Common myeloid progenitor, CD34-positive (primary cell): ENCODE measurements at regions of chr1 and their contacts with region 1.

Region 1: GRCh38 chr1:151024540-151025146 is 11.7 kb upstream of the BNIPL start:
- DNase-seq: peak; percentile 87 to 92 (median 88)
- H3K4me3 ChIP-seq: peak overlapping the region in 2 of 7 experiments; percentile 25 to 29
- H3K27ac ChIP-seq: no peak overlapping the region
- H3K4me1 ChIP-seq: peaks cover 0 to 4% (median 1%) of the 10 kb centered on the region in 4 experiments
- H3K27me3 ChIP-seq: no peaks in the 10 kb centered on the region

Region 2: GRCh38 chr1:151006327-151007052 is 18.2 kb before region 1 on chr1 and contains the start of gene MINDY1:
- CTCF ChIA-PET with region 1: interaction called, 10 read pairs
- POLR2A ChIA-PET with region 1: no interaction called
- DNase-seq: peak; percentile 73 to 81 (median 78)
- H3K4me3 ChIP-seq: peak within 1 kb of the TSS; percentile 64 to 88 (median 84)
- H3K27ac ChIP-seq: peak within 1 kb of the TSS; percentile 95 to 98
- H3K4me1 ChIP-seq: peaks cover 36 to 95% (median 87%) of the 10 kb centered on the region in 4 experiments
- H3K27me3 ChIP-seq: no peaks in the 10 kb centered on the region

Region 3: GRCh38 chr1:151047925-151048645 is 23.4 kb after region 1 on chr1:
- CTCF ChIA-PET with region 1: interaction called, 54 read pairs
- POLR2A ChIA-PET with region 1: no interaction called
- DNase-seq: peak; percentile 72 to 87 (median 85)
- H3K4me3 ChIP-seq: peak overlapping the region; percentile 56 to 92 (median 80)
- H3K27ac ChIP-seq: peak overlapping the region in 1 of 2 experiments; percentile 49
- H3K4me1 ChIP-seq: peaks cover 2 to 18% (median 9%) of the 10 kb centered on the region in 4 experiments
- H3K27me3 ChIP-seq: no peaks in the 10 kb centered on the region

Region 4: DNA sequence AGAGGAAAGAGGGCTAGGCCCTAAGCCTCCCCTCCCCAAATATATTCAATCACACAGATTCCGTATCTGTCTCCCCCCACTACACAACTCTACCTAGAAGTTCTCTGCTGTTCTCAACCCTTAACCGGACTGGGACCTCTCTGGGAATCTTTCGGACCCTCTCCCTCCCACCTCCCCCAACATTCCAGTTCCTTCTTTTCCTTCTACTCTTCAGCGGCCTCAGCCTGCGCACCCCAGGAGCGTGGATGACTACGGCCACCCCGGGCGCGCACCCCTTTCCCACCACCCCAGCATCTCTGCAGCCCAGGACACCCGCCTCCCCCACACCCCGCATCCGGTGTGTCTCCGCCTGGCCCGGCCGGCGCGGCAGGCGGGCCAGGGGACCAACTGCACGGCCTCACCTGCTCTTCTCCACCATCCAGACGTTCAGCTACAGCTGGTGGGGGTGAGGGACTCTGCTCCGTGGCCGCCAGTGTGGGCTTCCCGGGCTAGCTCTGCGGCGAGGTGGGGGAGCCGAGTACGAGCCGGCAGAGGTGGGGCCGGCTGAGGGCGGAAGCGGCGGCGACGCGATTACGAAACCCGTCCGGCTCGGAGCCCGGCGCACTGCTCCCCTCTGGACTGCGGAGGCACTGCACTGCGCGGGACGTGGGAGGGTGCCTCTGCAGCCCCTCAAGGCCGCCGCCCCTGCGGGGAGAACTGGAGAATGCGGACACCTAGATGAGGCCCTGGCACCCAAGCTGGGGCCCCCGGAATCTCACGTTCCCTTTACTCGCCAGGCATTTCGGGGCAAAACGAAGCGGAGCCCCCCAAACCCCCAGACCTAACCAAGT is 34.6 kb after region 1 on chr1 and contains the start of gene CDC42SE1:
- CTCF ChIA-PET with region 1: interaction called, 22 read pairs
- POLR2A ChIA-PET with region 1: no interaction called
- DNase-seq: peak; percentile 92 to 96 (median 94)
- H3K4me3 ChIP-seq: peak within 1 kb of the TSS; percentile 66 to 98 (median 95)
- H3K27ac ChIP-seq: peak within 1 kb of the TSS; percentile 79 to 93
- H3K4me1 ChIP-seq: peaks cover 18 to 60% (median 53%) of the 10 kb centered on the region in 4 experiments
- H3K27me3 ChIP-seq: no peaks in the 10 kb centered on the region

Region 5: DNA sequence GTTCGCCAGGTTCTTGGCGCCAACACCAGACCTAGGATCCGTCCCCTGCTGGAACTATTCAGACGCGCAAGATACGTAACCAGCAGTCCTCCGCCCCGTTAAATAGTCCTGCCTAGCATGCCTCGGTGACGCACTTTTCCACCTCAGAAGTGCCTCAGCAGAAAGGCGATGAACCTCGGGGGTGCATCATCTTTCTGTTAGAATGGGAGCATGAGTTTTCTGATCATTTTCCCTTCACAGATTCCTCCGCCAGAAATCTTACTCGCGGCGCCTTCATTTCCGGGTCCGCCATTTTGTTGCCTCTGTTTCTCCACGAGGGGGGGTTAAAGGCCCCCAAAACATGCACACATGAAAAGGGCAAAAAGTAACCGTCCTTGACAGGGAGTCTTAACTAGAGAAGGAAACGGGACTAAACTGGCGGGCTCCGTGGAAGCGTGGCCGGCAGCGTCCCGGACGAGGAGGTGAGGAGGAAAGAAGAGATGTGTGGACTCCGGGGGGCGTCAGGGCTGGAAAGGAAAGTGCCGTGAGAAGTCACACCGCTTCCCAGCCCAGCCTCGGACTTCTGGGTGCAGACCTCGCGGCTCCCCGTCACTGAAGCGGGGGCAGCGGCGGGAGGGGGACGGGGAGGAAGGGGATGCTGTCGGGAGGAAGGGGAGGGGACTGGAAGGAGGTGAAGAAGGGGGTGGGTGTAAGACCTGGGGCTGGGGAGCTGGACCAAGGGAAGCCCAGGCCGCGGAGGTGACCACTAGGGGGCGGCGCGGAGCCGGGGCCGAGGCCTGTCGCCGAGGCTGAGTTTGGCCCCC is 46.0 kb after region 1 on chr1 and contains the start of gene GABPB2:
- CTCF ChIA-PET with region 1: interaction called, 10 read pairs
- POLR2A ChIA-PET with region 1: no interaction called
- DNase-seq: peak; percentile 94 to 96 (median 95)
- H3K4me3 ChIP-seq: peak within 1 kb of the TSS; percentile 57 to 99 (median 94)
- H3K27ac ChIP-seq: peak within 1 kb of the TSS; percentile 90 to 96
- H3K4me1 ChIP-seq: peaks cover 0 to 18% (median 16%) of the 10 kb centered on the region in 4 experiments
- H3K27me3 ChIP-seq: no peaks in the 10 kb centered on the region

Region 6: GRCh38 chr1:151156515-151156819 is 131.8 kb after region 1 on chr1 and contains the start of gene TNFAIP8L2:
- CTCF ChIA-PET with region 1: interaction called, 14 read pairs
- POLR2A ChIA-PET with region 1: no interaction called
- DNase-seq: peak; percentile 64 to 78 (median 74)
- H3K4me3 ChIP-seq: peak within 1 kb of the TSS; percentile 45 to 86 (median 79)
- H3K27ac ChIP-seq: peak within 1 kb of the TSS; percentile 51 to 76
- H3K4me1 ChIP-seq: peaks cover 24 to 63% (median 55%) of the 10 kb centered on the region in 4 experiments
- H3K27me3 ChIP-seq: no peaks in the 10 kb centered on the region